ENCODE measurements at regions of chr13 and their contacts with region 1.

Region 1: GRCh38 chr13:26253787-26254582 is at the start of gene CDK8:
- DNase-seq: peak; percentile 93 to 96 (median 93)
- ATAC-seq: peak; percentile 92 to 98 (median 96)
- H3K4me3 ChIP-seq: peak within 1 kb of the TSS; percentile 70 to 97 (median 89)
- H3K27ac ChIP-seq: peak within 1 kb of the TSS; percentile 86 to 97 (median 93)
- H3K4me1 ChIP-seq: peaks cover 0 to 28% (median 17%) of the 10 kb centered on the region in 12 donors
- H3K27me3 ChIP-seq: peaks cover 0 to 3% (median 0%) of the 10 kb centered on the region in 9 donors
- CTCF ChIP-seq: no peak
- POLR2A ChIP-seq: peak in 1 of 2 donors; percentile 60
- total RNA-seq, gene CDK8: 8.4 to 11.6 (median 9.9) TPM

Region 2: DNA sequence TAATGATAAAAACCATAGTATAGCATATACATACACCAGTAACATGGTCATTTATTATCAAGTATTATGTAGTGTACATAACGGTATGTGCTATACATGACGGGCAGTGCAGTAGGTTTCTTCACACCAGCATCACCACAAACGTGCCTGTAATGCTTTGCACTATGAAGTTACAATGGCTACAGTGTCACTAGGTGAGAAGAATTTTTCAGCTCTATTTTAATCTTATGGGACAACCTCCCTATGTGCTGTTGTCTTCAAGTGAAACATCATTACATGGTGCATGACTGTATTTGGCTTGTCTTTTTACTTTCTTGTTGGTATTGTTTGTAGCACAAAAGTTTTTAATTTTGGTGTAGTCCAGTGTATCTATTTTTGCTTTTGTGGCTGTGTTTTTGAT is 18.6 kb after region 1 on chr13:
- intact Hi-C with region 1: no loop called
- DNase-seq: no peak
- ATAC-seq: peak in 1 of 4 donors; percentile 26
- H3K4me3 ChIP-seq: no peak overlapping the region
- H3K27ac ChIP-seq: no peak overlapping the region
- H3K4me1 ChIP-seq: peaks cover 0 to 27% (median 13%) of the 10 kb centered on the region in 12 donors
- H3K27me3 ChIP-seq: no peaks in the 10 kb centered on the region
- CTCF ChIP-seq: no peak
- POLR2A ChIP-seq: no peak

Region 3: DNA sequence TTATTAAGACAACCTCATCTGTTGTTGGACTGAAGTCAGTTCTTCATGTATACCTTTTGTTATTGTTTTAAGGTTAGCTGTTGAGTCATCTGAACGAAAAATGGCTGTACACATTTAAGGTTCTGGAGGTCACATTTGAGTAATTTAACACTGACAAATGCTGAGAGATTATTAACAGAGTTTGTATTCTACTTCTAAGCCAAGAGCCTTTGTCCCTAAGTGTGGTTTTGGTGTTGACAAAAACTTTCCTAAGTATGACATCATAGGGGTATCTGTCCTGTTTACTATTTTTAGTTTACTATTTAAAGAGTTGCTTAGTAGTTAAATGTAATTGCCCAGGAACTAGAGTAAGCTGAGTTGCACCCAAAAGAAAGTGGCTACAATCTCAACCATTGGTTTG is 71.9 kb after region 1 on chr13:
- intact Hi-C with region 1: loop called in 2 of 10 experiments (anchors 2 to 10 kb)
- DNase-seq: no peak
- ATAC-seq: peak; percentile 66 to 81 (median 69)
- H3K4me3 ChIP-seq: no peak overlapping the region
- H3K27ac ChIP-seq: peak overlapping the region in 9 of 12 donors; percentile 7 to 65 (median 37)
- H3K4me1 ChIP-seq: peaks cover 0 to 45% (median 30%) of the 10 kb centered on the region in 12 donors
- H3K27me3 ChIP-seq: no peaks in the 10 kb centered on the region
- CTCF ChIP-seq: no peak
- POLR2A ChIP-seq: no peak

Region 4: GRCh38 chr13:26460648-26461047 is 206.7 kb after region 1 on chr13:
- intact Hi-C with region 1: loop called in 1 of 10 experiments (anchors 10 kb)
- DNase-seq: peak; percentile 86 to 94 (median 90)
- ATAC-seq: peak; percentile 82 to 86 (median 83)
- H3K4me3 ChIP-seq: no peak overlapping the region
- H3K27ac ChIP-seq: peak overlapping the region; percentile 35 to 84 (median 68)
- H3K4me1 ChIP-seq: peaks cover 0 to 42% (median 0%) of the 10 kb centered on the region in 12 donors
- H3K27me3 ChIP-seq: peaks cover 0 to 4% (median 0%) of the 10 kb centered on the region in 9 donors
- CTCF ChIP-seq: no peak
- POLR2A ChIP-seq: no peak

Region 5: DNA sequence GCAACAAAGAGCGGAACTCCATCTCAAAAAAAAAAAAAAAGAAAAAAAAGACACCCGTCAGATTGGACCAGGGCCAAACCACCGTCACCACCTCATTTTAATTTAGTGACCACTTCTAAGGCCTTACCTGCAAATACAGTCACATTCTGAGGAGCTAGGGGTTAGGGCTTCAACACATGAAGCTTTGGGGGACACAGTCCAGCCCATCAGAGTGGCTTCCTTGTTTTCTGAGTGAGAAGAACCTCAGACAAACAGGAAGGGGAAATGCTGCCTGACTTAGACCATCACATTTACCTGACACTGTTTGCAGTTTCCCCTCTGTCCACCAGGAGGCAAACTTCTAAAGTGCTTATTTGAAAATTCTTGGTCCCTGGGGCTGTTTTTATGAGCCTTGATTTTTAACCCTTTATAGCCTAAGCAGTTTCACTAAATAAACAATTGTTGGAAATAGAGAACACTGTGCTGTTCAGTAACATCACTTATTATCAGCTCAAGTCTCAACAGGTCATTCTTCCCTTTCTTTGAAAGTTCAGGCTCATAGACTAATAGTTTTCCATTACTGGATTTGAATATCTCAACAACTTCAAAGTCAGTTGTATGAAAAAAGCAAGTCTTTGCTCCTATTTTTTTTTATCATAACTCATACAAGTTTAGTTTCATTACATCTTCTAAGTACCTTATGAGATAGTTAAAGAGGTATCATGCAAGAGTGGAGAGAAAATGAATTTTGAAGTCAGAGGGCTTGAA is 228.6 kb after region 1 on chr13:
- intact Hi-C with region 1: loop called in 3 of 10 experiments (anchors 5 to 10 kb)
- DNase-seq: peak in 2 of 5 donors; percentile 37 to 51
- ATAC-seq: peak in 1 of 4 donors; percentile 32
- H3K4me3 ChIP-seq: no peak overlapping the region
- H3K27ac ChIP-seq: no peak overlapping the region
- H3K4me1 ChIP-seq: peaks cover 0 to 22% (median 4%) of the 10 kb centered on the region in 12 donors
- H3K27me3 ChIP-seq: no peaks in the 10 kb centered on the region
- CTCF ChIP-seq: peak; percentile 70 to 92 (median 82)
- POLR2A ChIP-seq: no peak

Measured in heart left ventricle (tissue), 16 donors.